BJ (cell line): ENCODE measurements at regions of chr9 and their contacts with region 1.

Region 1: DNA sequence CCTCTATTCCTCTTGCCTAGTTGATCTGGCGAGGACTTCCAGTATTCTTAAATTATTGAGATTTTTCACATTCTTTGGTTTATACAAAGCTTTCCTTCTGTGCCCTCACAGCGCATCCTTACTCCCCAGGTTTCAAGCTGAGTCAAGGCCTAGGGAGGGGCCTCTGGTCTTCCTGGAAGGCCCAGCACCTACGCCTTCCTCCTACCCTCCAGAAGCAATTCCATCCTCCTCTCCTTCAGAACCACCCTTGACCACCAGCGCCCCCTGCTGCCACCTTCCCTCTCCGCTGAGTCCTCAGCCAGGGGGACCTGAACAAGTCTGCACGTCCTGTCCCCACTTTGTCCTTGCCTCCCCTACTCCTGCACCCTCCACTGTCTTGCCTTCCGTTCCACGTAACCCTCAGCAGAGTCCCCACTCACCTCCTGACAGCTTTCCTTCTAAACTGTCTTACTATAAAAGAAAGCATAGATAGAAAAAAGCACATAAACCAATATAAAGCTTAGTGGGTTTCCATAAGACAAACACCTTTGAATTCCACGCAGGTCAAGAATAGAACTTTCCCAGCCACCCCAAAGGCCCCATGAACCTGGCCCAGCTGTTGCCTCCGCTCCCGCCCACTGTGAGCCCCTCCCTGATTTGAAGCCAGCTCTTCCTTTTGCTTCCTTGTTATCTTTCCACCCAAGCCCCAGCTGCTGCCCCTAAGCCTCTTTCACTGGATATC is 63.0 kb upstream of the CTSL start:
- DNase-seq: peak; percentile 30
- H3K4me3 ChIP-seq: no peak overlapping the region
- H3K27me3 ChIP-seq: no peaks in the 10 kb centered on the region
- CTCF ChIP-seq: peak; percentile 88

Region 2: DNA sequence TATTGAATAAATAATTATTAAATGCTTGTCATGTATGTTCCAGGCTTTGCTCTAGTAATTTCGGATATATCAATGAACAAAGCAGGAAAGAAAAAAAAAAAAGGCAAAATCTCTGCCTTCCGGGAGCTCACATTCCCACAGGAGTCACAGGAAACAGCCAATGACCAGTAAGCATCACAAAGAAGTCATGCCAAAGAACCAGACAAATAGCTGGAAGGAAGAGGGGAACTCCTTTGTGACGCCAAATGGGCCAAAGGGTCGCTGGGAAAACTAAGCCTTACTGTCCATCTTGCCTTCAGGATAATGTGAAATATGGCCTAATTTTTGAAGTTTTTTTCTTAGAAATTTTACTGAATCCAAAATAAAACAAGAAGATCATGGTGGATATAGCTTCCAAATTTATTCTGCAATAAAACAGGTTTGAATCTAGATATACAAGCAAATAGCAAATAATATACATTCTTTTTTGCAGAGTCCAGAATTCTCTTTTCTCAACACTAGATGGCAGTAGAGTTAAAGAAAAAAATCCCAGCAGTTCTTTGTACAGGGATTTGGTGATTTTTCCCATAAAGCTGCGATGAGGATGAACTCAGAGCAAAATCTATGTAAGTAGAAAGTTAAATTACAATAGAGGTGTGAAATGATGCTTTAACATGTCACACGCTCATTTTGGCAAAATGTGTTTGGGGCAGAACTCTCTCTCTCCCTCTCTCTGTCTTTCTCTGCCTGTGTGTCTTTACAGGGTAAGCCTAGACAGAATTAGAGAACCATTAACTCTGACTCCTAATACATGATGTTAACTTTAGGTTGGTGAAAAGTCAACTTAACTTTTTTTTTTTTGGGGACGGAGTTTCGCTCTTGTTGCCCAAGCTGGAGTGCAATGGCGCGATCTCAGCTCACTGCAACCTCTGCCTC is 1248.7 kb before region 1 on chr9:
- CTCF ChIA-PET with region 1: interaction called, 15 read pairs
- POLR2A ChIA-PET with region 1: no interaction called
- DNase-seq: no peak
- H3K4me3 ChIP-seq: no peak overlapping the region
- H3K27me3 ChIP-seq: no peaks in the 10 kb centered on the region; the same call in 1 of the 2 replicates
- CTCF ChIP-seq: peak; percentile 51

Region 3: GRCh38 chr9:87336914-87337333 is 326.0 kb before region 1 on chr9:
- CTCF ChIA-PET with region 1: interaction called, 23 read pairs
- POLR2A ChIA-PET with region 1: no interaction called
- DNase-seq: no peak
- H3K4me3 ChIP-seq: peak overlapping the region; percentile 16
- H3K27me3 ChIP-seq: 0 out of 2 replicates have a peak, but pooled peaks cover 2% of the 10 kb centered on the region
- CTCF ChIP-seq: peak; percentile 59

Region 4: DNA sequence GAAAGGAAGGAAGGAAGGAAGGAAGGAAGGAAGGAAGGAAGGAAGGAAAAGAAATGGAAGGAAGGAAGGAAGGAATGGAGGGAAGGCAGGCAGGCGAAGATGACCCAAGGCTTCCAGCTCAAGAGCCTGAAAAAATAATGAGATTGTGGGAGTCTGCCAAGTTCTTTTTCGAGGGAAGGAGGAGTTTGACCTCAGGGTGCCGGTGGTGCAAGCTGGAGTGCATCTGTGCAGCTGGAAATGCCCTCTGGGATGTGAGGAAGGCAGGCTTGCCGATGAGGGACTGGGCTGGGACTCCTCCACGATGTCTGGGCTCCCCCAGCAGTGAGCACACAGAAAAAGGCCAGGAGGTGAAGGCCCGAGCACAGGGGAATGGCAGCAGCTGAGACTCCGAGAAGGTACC is 320.2 kb before region 1 on chr9:
- CTCF ChIA-PET with region 1: interaction called, 23 read pairs
- POLR2A ChIA-PET with region 1: no interaction called
- DNase-seq: no peak
- H3K4me3 ChIP-seq: no peak overlapping the region
- H3K27me3 ChIP-seq: peaks cover 2% of the 10 kb centered on the region
- CTCF ChIP-seq: no peak

Region 5: DNA sequence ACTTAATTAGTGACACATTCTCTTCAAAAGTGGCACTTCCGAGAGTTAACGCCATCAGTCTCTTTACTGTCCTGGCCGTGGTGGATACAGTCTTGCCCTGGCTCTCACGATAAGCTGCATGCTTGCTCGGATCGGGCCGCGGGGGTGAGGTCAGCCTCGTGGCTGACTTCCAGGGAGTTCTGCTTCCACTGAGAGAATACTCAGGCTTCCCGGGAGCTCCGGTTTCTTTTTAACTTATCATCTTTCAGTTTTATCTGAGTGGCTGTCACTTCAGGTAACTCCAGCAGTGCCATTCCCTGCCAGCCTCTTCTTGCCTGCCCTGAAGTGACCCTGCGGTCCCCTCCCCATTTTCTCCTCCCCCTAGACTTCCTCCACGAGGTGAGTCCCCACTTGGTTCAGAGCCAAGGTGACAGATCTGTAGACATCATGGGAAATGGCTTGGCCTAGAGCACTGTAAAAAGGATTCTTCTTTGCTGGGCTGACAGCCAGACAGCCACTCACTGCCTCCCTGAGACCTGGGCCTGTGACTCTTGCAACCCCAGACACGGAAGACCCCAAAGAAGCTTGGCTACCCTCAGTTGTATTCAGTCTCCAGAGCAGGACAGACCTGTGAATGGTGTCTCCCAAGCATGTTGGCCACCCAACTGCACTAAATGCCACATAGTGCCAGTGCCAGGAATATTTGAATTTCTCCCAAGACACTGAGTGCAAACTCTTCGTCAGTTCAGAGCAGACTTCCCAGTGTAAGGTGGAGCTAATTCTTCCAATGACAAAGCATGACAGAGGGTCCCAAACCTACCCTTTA is 70.2 kb before region 1 on chr9:
- CTCF ChIA-PET with region 1: interaction called, 10 read pairs
- POLR2A ChIA-PET with region 1: no interaction called
- DNase-seq: peak; percentile 15
- H3K4me3 ChIP-seq: peak overlapping the region; percentile 16; the same call in 1 of the 2 replicates
- H3K27me3 ChIP-seq: no peaks in the 10 kb centered on the region
- CTCF ChIP-seq: no peak

Region 6: DNA sequence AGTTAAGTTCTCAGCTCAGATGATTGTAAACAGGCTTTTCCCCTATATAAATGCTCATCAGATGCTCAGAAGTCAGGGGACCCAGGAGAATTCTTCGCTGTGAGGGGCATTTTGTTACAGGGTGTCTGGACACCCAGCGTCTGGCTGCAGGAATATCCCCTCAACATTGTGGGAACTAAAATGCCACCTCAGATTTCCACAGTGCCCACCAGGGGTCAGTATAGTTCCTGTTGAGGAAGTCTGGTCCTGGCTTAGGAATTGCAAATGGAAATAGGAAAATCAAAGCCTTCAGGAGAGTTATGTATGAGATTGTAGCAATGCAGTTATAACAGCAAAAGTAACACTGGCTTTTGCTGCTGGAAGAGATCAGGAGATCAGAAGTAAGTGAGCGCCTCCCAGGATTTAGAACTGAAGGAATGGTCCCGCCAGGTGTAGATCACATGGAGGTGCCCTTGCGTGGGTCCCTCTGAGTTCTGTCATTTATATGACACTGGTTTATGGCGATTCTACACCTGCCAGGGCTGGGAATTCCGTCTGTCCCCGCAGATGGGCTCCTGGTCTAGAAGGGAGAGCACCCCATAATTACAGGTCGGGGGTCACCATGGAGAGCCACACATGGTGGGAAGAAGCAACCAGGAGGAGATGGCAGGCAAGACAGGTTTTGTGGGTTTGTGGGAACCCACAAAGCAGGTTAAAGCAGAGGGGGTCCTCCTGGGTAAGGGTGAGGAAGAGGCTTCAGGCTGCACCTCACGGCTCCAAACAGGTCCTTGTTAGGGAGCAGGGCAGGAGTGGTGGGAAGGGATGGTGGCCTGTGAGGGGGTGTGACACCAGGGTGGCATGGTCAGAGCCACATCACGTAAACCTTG is 15.9 kb after region 1 on chr9:
- CTCF ChIA-PET with region 1: interaction called, 13 read pairs
- POLR2A ChIA-PET with region 1: no interaction called
- DNase-seq: no peak
- H3K4me3 ChIP-seq: no peak overlapping the region
- H3K27me3 ChIP-seq: no peaks in the 10 kb centered on the region
- CTCF ChIP-seq: peak; percentile 82